Activated naive CD4-positive, alpha-beta T cell treated with anti-CD3 and anti-CD28 coated beads, Interleukin-2, amount 10 ng/mL, durations not matched to agents 7 days and 5 days (primary cell): ENCODE measurements at regions of chr6 and their contacts with region 1.

Region 1: GRCh38 chr6:88870717-88871330 is 92.6 kb downstream of the RNGTT start:
- DNase-seq: peak; percentile 59
- H3K4me3 Mint-ChIP-seq: no peak overlapping the region
- H3K27ac Mint-ChIP-seq: no peak overlapping the region
- H3K4me1 Mint-ChIP-seq: peaks cover 19% of the 10 kb centered on the region
- H3K27me3 Mint-ChIP-seq: no peaks in the 10 kb centered on the region

Region 2: GRCh38 chr6:87929843-87930288 is 941.0 kb before region 1 on chr6:
- CTCF ChIA-PET with region 1: interaction called, 17 read pairs
- DNase-seq: peak; percentile 72
- H3K4me3 Mint-ChIP-seq: no peak overlapping the region
- H3K27ac Mint-ChIP-seq: no peak overlapping the region
- H3K4me1 Mint-ChIP-seq: no peaks in the 10 kb centered on the region
- H3K27me3 Mint-ChIP-seq: peaks cover 4% of the 10 kb centered on the region